Mammary epithelial cell (primary cell): ENCODE measurements at regions of chr5 and their contacts with region 1.

Region 1: DNA sequence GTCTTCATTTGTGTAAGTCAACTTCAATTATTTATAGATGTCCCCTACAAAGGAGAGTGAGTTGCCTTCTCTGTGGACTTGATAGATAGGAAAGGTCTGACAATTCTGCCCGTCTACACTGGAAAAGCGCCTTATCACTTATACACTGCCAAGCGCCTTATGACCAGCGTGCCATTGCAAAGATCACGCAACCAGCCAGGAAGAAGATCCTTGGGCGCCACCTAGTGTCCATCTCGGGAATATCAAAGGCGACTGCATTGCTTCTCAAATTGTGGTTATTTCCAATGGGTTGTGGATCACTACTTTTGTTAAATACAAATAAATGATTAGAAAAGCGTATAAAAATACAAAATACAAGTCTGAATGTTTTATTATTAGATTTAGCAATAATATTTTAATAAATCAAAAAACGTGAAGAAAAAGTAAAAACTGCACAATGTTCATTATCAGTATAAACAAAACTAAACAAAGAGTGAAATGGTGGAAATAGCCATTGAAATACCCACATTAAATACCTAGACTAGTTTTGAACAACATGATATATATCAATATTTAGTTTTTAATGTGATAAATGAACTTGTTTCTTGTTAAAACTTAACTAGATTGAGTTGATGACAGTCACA is 27.8 kb downstream of the SUB1 start:
- DNase-seq: peak; percentile 51
- H3K4me3 ChIP-seq: no peak overlapping the region
- H3K27ac ChIP-seq: no peak overlapping the region
- H3K4me1 ChIP-seq: no peaks in the 10 kb centered on the region
- H3K27me3 ChIP-seq: no peaks in the 10 kb centered on the region
- CTCF ChIP-seq: peak; percentile 86 to 88

Region 2: GRCh38 chr5:32092938-32093812 is 520.0 kb before region 1 on chr5:
- CTCF ChIA-PET with region 1: no interaction called
- dilution Hi-C with region 1: no loop called
- in situ Hi-C with region 1: no loop called
- intact Hi-C with region 1: loop called (anchors 10 kb)
- DNase-seq: peak; percentile 66
- H3K4me3 ChIP-seq: no peak overlapping the region
- H3K27ac ChIP-seq: no peak overlapping the region
- H3K4me1 ChIP-seq: no peaks in the 10 kb centered on the region
- H3K27me3 ChIP-seq: no peaks in the 10 kb centered on the region
- CTCF ChIP-seq: peak; percentile 61 to 78

Region 3: GRCh38 chr5:32489791-32490582 is 123.2 kb before region 1 on chr5:
- CTCF ChIA-PET with region 1: interaction called, 8 read pairs
- dilution Hi-C with region 1: no loop called
- in situ Hi-C with region 1: loop called (anchors 10 kb)
- intact Hi-C with region 1: loop called (anchors 1 kb)
- DNase-seq: peak; percentile 33
- H3K4me3 ChIP-seq: no peak overlapping the region
- H3K27ac ChIP-seq: no peak overlapping the region
- H3K4me1 ChIP-seq: no peaks in the 10 kb centered on the region
- H3K27me3 ChIP-seq: no peaks in the 10 kb centered on the region
- CTCF ChIP-seq: peak; percentile 67 to 72

Region 4: DNA sequence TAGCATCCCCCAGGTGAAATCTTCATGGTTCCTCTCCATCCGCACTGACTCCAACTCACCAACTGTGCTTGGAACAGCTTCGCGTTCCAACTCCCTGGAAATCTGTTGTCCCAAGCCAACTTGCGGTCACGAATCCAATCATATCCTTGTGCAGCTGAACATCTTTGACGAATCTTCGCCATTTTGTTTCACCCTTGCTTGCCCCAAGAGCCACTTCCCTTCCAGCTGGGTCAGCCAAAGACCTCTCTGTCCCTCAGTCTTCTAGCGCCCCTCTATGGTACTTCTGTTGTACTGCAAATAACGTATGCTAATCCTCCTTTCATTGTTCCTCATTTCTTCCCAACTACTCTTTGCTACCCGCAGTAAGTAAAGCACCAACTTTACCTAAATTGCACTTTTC is 766.6 kb after region 1 on chr5:
- CTCF ChIA-PET with region 1: no interaction called
- dilution Hi-C with region 1: no loop called
- in situ Hi-C with region 1: no loop called
- intact Hi-C with region 1: loop called (anchors 1 kb)
- DNase-seq: peak; percentile 20
- H3K4me3 ChIP-seq: no peak overlapping the region
- H3K27ac ChIP-seq: no peak overlapping the region
- H3K4me1 ChIP-seq: peaks cover 6% of the 10 kb centered on the region
- H3K27me3 ChIP-seq: no peaks in the 10 kb centered on the region
- CTCF ChIP-seq: peak; percentile 50 to 51

Region 5: DNA sequence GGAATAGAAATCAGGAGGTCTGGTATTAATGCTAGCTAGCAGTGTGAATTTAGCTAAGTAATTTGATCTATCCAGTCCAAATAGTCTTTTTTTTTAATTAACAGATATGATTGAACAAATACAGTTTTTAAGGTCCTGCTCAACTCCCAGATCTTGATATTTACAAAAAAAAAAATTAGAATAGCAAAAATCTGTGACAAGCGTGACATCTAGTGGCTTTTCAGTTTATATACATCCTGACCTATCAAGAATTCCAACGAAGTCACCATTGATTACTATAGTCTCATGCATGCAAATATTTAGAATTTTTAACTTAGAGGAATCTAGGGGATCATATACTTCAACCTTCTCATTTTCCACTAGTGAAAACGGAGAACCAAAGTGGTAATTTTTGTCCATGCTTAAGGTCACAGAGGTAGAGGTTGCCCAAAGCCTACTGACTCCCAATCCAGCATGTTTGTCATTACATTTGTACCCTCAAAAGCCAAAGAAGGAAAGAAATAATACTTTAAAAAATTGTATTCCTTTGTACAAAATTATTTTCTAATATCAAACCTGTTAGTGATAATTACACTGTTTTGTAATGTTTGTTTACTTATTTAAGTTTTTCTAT is 810.0 kb after region 1 on chr5:
- CTCF ChIA-PET with region 1: no interaction called
- dilution Hi-C with region 1: no loop called
- in situ Hi-C with region 1: no loop called
- intact Hi-C with region 1: loop called (anchors 10 kb)
- DNase-seq: no peak
- H3K4me3 ChIP-seq: no peak overlapping the region
- H3K27ac ChIP-seq: no peak overlapping the region
- H3K4me1 ChIP-seq: no peaks in the 10 kb centered on the region
- H3K27me3 ChIP-seq: no peaks in the 10 kb centered on the region
- CTCF ChIP-seq: peak; percentile 27 to 51